ENCODE measurements at regions of chr9 and their contacts with region 1.

Region 1: GRCh38 chr9:113410207-113410864 is at the starts of genes C9orf43 and POLE3:
- DNase-seq: peak; percentile 98
- ATAC-seq: peak; percentile 93
- H3K4me3 Mint-ChIP-seq: peak within 1 kb of the TSS; percentile 98
- H3K27ac Mint-ChIP-seq: peak within 1 kb of the TSS; percentile 100
- H3K4me1 Mint-ChIP-seq: peaks cover 36% of the 10 kb centered on the region
- H3K27me3 Mint-ChIP-seq: no peaks in the 10 kb centered on the region
- total RNA-seq, gene C9orf43: 0.91 to 1.1 TPM
- total RNA-seq, gene POLE3: 53.3 to 57.4 TPM

Region 2: GRCh38 chr9:113221003-113221799 is 189.1 kb before region 1 on chr9 and contains the starts of genes FKBP15 and SLC31A1:
- CTCF ChIA-PET with region 1: interaction called, 7 read pairs
- POLR2A ChIA-PET with region 1: interaction called, 9 read pairs
- intact Hi-C with region 1: loop called (anchors 1 to 2 kb)
- DNase-seq: peak; percentile 98
- ATAC-seq: peak; percentile 97
- H3K4me3 Mint-ChIP-seq: peak within 1 kb of the TSS; percentile 89
- H3K27ac Mint-ChIP-seq: peak within 1 kb of the TSS; percentile 93
- H3K4me1 Mint-ChIP-seq: peaks cover 46% of the 10 kb centered on the region
- H3K27me3 Mint-ChIP-seq: no peaks in the 10 kb centered on the region
- total RNA-seq, gene FKBP15: 34.0 to 44.2 TPM
- total RNA-seq, gene SLC31A1: 14.8 to 18.2 TPM

Region 3: DNA sequence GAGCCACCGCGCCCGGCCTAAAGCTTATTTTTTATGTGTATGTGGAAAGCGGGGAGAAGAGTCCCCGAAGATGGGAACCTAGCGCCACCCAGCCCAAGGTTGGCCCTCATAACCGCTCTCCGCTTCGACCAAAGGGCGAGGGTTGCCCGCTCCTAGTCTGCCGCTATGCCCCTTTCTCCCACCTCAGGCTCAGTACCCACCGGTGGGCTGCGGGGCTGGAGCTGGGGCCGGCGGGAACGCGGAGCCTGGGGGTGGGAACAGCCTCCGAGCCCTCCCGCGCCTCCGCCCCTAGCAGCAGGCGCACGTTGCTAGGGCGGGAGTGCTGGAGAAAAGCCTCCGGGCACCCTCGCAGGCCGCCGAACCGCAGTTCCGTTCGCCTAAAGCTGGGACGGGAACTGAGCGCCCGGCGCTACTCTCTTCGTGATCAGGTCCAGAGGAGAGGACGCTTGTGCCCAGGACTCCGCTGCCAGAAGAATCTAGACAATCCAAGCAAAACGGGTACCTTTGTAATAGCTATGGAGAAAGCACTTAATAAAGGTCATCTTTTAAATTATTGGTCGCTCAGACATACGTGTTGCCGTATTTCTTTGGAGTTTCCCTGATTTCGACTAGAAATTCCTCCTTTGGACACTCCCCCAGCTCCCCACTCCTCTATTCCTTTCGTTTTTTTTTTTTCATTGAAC is 70.2 kb before region 1 on chr9 and contains the start of gene WDR31:
- CTCF ChIA-PET with region 1: interaction called, 8 read pairs
- POLR2A ChIA-PET with region 1: interaction called, 6 read pairs
- intact Hi-C with region 1: loop called (anchors 1 to 2 kb)
- DNase-seq: peak; percentile 88
- ATAC-seq: peak; percentile 96
- H3K4me3 Mint-ChIP-seq: peak within 1 kb of the TSS; percentile 71
- H3K27ac Mint-ChIP-seq: peak within 1 kb of the TSS; percentile 43
- H3K4me1 Mint-ChIP-seq: peaks cover 27% of the 10 kb centered on the region
- H3K27me3 Mint-ChIP-seq: no peaks in the 10 kb centered on the region
- total RNA-seq, gene WDR31: 1.7 to 2.1 TPM

Region 4: DNA sequence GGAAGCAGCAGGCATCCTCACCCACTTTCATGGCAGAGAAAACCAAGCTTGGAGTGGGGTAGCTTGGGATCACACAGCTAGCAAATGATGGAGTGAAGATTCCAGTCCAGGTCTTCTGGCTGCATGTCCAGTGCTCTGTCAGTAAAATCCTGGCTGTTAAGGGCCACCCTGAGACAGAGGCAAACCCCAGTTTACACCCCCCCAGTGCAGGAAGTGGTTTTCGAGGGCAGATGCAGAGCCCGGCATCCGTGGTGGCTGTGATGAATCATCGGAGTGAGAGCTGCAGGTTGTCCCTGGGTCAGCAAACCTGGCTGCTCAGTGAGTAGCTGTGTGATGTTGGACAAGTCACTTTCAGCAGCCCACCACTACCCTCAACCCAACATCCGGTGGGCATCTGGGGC is 168.5 kb after region 1 on chr9:
- CTCF ChIA-PET with region 1: interaction called, 4 read pairs
- POLR2A ChIA-PET with region 1: interaction called, 10 read pairs
- intact Hi-C with region 1: loop called (anchors 1 kb)
- DNase-seq: peak; percentile 94
- ATAC-seq: peak; percentile 66
- H3K4me3 Mint-ChIP-seq: peak overlapping the region; percentile 81
- H3K27ac Mint-ChIP-seq: peak overlapping the region; percentile 86
- H3K4me1 Mint-ChIP-seq: peaks cover 66% of the 10 kb centered on the region
- H3K27me3 Mint-ChIP-seq: no peaks in the 10 kb centered on the region

Region 5: GRCh38 chr9:113886466-113886865 is 476.1 kb after region 1 on chr9:
- CTCF ChIA-PET with region 1: no interaction called
- POLR2A ChIA-PET with region 1: no interaction called
- intact Hi-C with region 1: loop called in 1 of 2 experiments (anchors 10 kb)
- DNase-seq: no peak
- ATAC-seq: peak; percentile 51
- H3K4me3 Mint-ChIP-seq: no peak overlapping the region
- H3K27ac Mint-ChIP-seq: peak overlapping the region; percentile 5
- H3K4me1 Mint-ChIP-seq: peaks cover 17% of the 10 kb centered on the region
- H3K27me3 Mint-ChIP-seq: peaks cover 2% of the 10 kb centered on the region